Heart left ventricle (tissue), 16 donors: ENCODE measurements at regions of chr6 and their contacts with region 1.

Region 1: DNA sequence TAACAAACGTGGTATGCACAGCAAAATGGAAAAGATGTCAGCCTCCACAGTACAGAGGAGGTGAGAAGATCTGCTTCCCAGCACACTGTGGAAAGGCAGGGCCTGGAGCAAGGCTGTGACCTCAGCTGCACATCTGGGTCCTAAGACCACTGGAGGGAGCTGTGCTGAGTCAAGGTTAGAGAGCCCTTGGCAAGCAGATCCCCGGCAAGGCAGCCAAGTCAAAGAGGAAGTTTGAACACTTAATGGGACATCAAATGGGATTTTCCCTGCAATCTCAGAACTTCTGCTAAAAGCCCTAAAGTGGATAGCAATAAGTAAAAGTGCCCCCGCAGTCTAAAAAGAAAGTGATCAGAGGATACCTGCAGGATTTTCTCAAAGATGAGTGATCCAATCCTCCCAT is 39.5 kb downstream of the UNC5CL start:
- DNase-seq: peak in 4 of 5 donors; percentile 67 to 79 (median 69)
- ATAC-seq: peak; percentile 61 to 76 (median 68)
- H3K4me3 ChIP-seq: no peak overlapping the region
- H3K27ac ChIP-seq: peak overlapping the region in 4 of 12 donors; percentile 6 to 82 (median 52)
- H3K4me1 ChIP-seq: peaks cover 0 to 32% (median 4%) of the 10 kb centered on the region in 12 donors
- H3K27me3 ChIP-seq: no peaks in the 10 kb centered on the region
- CTCF ChIP-seq: peak in 11 of 12 donors; percentile 9 to 67 (median 41)
- POLR2A ChIP-seq: no peak

Region 2: GRCh38 chr6:40900791-40901190 is 98.8 kb before region 1 on chr6:
- intact Hi-C with region 1: loop called in 2 of 10 experiments (anchors 5 kb)
- DNase-seq: peak in 4 of 5 donors; percentile 52 to 63 (median 58)
- ATAC-seq: peak; percentile 90 to 93 (median 92)
- H3K4me3 ChIP-seq: no peak overlapping the region
- H3K27ac ChIP-seq: peak overlapping the region; percentile 78 to 97 (median 87)
- H3K4me1 ChIP-seq: peaks cover 0 to 53% (median 21%) of the 10 kb centered on the region in 12 donors
- H3K27me3 ChIP-seq: no peaks in the 10 kb centered on the region
- CTCF ChIP-seq: no peak
- POLR2A ChIP-seq: no peak

Region 3: DNA sequence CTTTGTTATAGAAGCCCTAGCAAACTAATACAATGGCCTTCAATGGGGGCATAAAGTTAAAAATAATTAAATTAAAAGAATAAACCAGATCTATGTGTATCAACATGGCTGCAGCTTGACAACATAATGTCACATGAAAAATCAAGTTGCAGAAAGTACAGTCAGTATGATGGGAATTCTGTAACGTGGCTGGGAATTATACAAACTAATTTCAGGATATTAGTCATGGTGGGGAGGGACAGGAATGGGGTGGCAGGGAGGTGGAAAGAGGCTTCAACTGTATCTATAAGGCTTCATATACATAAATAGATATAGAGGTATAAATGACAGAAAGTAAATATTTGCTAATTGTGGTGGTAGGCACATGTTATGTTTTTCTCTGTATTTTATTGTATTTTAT is 67.6 kb before region 1 on chr6:
- intact Hi-C with region 1: loop called in 1 of 10 experiments (anchors 2 kb)
- DNase-seq: no peak
- ATAC-seq: no peak
- H3K4me3 ChIP-seq: no peak overlapping the region
- H3K27ac ChIP-seq: peak overlapping the region in 2 of 12 donors; percentile 24 to 40
- H3K4me1 ChIP-seq: peaks cover 0 to 26% (median 6%) of the 10 kb centered on the region in 12 donors
- H3K27me3 ChIP-seq: no peaks in the 10 kb centered on the region
- CTCF ChIP-seq: no peak
- POLR2A ChIP-seq: no peak

Region 4: GRCh38 chr6:41066867-41067304 is 67.3 kb after region 1 on chr6:
- intact Hi-C with region 1: loop called in 3 of 10 experiments (anchors 10 kb)
- DNase-seq: peak in 4 of 5 donors; percentile 61 to 76 (median 73)
- ATAC-seq: no peak
- H3K4me3 ChIP-seq: no peak overlapping the region
- H3K27ac ChIP-seq: peak overlapping the region in 2 of 12 donors; percentile 3 to 7
- H3K4me1 ChIP-seq: peaks cover 0 to 38% (median 11%) of the 10 kb centered on the region in 12 donors
- H3K27me3 ChIP-seq: no peaks in the 10 kb centered on the region
- CTCF ChIP-seq: peak; percentile 74 to 90 (median 86)
- POLR2A ChIP-seq: no peak